ENCODE measurements at regions of chr4 and their contacts with region 1.

Region 1: DNA sequence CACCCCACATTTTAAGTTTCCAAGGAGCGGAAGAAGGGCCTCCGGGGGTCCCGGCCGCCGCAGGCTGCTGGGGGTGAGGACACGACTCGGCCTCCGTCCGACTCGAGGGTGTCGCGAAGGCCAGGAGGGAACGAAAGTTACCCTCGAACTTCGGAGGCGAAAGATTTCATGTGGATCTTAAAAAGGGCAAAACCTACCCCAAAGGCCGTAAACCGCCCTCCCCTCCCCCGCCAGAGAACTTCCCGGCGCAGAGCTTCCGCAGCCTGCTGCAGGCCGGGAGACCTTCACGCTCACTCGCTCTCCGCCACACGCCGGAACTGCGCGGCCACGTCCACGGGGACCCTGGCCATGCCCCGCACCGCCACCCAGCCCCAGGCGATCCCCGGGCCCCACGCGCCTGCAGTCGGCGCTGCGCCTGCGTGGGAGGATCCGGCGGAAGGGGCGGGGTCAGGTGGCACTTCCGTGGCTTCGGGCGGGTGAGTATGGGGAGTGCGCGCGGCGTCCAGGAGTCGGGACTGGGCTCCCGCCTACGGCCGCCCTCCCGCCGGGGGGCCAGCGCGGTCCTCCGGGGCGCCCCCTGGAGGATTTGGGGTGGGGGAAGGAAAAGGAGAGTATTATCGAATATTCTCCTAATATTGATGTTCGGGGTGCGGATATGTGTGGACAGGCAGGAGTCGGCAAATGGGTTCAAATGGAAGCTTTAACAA is at the start of gene MMAA:
- DNase-seq: peak; percentile 94 to 96
- ATAC-seq: peak; percentile 88 to 96 (median 94)
- H3K4me3 ChIP-seq: peak within 1 kb of the TSS; percentile 85
- H3K4me3 Mint-ChIP-seq: peak within 1 kb of the TSS; percentile 98
- H3K27ac ChIP-seq: peak within 1 kb of the TSS; percentile 96
- H3K27ac Mint-ChIP-seq: peak within 1 kb of the TSS; percentile 97 to 98
- H3K4me1 ChIP-seq: peaks cover 11% of the 10 kb centered on the region
- H3K4me1 Mint-ChIP-seq: peaks cover 53 to 54% of the 10 kb centered on the region in 2 donors
- H3K27me3 ChIP-seq: no peaks in the 10 kb centered on the region
- H3K27me3 Mint-ChIP-seq: peaks cover under 1 to 8% of the 10 kb centered on the region in 2 donors
- CTCF ChIP-seq: peak; percentile 49
- total RNA-seq, gene MMAA: 7.8 to 11.7 (median 9.7) TPM

Region 2: DNA sequence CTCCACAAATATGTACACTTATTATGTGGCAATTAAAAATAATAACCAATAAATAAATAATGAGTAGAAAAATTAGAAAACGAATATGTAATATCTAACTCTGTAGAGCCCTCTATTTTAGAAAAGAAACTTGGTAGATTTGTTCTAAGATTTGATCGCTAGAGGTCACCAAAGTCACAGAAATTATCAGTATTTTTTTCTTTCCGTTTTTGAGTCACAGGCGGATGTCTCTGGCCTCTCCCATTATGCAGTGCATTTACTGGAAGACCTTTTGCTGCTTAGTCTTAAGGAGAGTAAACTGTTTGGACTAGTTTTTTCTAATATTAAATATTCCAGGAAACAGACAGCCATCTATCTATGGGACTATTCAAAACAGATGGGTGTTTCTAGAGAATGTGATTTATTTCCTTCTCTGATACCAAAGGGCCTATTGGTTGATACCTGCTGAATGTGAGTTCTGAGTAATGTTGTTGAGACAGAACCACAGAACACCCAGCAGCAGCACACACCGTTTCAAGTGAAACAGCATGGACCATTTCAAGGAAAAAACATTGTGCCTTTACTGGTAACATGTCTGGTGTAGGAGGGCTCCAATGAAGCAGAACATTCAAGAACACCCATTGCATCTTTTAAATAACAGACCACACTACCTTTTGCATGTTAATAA is 1444.6 kb before region 1 on chr4:
- intact Hi-C with region 1: loop called (anchors 5 kb)
- DNase-seq: peak in 1 of 2 donors; percentile 67
- ATAC-seq: peak in 2 of 3 donors; percentile 59 to 60
- H3K4me3 ChIP-seq: no peak overlapping the region
- H3K4me3 Mint-ChIP-seq: no peak overlapping the region
- H3K27ac ChIP-seq: no peak overlapping the region
- H3K27ac Mint-ChIP-seq: no peak overlapping the region
- H3K4me1 ChIP-seq: no peaks in the 10 kb centered on the region
- H3K4me1 Mint-ChIP-seq: no peaks in the 10 kb centered on the region
- H3K27me3 ChIP-seq: no peaks in the 10 kb centered on the region
- H3K27me3 Mint-ChIP-seq: peaks cover 5% of the 10 kb centered on the region in 2 donors
- CTCF ChIP-seq: peak; percentile 51

Region 3: GRCh38 chr4:145180298-145181090 is 438.6 kb before region 1 on chr4 and contains the start of gene OTUD4:
- intact Hi-C with region 1: loop called (anchors 2 kb)
- DNase-seq: peak; percentile 94 to 97
- ATAC-seq: peak; percentile 78 to 95 (median 84)
- H3K4me3 ChIP-seq: peak within 1 kb of the TSS; percentile 82
- H3K4me3 Mint-ChIP-seq: peak within 1 kb of the TSS; percentile 95
- H3K27ac ChIP-seq: peak within 1 kb of the TSS; percentile 99
- H3K27ac Mint-ChIP-seq: peak within 1 kb of the TSS; percentile 95 to 97
- H3K4me1 ChIP-seq: peaks cover 25% of the 10 kb centered on the region
- H3K4me1 Mint-ChIP-seq: peaks cover 36 to 37% of the 10 kb centered on the region in 2 donors
- H3K27me3 ChIP-seq: no peaks in the 10 kb centered on the region
- H3K27me3 Mint-ChIP-seq: no peaks in the 10 kb centered on the region
- CTCF ChIP-seq: no peak
- total RNA-seq, gene OTUD4: 60.0 to 73.3 (median 71.6) TPM

Region 4: DNA sequence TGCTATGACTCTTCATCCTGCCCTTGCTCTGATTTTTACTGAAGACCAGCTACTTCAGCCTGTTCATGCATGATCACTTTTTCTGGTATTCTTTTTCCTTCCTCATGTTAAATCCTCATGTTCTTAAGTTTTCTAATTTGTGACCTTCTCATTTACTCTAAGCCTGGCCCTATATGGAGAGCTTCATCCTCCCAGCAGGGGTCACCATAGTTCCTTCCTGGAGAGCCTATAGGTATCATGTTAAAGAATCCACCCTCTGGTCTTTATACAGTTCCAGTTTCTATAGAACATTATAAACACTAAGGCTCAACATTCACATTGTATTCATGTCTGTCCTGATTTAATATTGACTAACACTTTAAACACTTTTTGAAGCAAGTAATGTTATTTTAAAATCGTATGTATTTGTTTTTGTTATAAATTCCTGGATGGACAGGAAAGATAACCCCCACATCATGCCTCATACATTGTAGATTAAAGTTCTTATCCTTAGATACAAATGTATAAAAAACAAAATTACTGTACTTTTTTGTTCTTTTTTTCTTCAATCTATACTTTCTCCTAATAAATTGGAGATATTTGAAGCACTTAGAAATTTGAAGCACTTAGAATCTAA is 384.9 kb before region 1 on chr4:
- intact Hi-C with region 1: loop called (anchors 2 kb)
- DNase-seq: peak in 1 of 2 donors; percentile 76
- ATAC-seq: peak; percentile 77 to 92 (median 88)
- H3K4me3 ChIP-seq: no peak overlapping the region
- H3K4me3 Mint-ChIP-seq: no peak overlapping the region
- H3K27ac ChIP-seq: no peak overlapping the region
- H3K27ac Mint-ChIP-seq: no peak overlapping the region
- H3K4me1 ChIP-seq: no peaks in the 10 kb centered on the region
- H3K4me1 Mint-ChIP-seq: no peaks in the 10 kb centered on the region
- H3K27me3 ChIP-seq: no peaks in the 10 kb centered on the region
- H3K27me3 Mint-ChIP-seq: peaks cover 2 to 5% of the 10 kb centered on the region in 2 donors
- CTCF ChIP-seq: peak; percentile 67

Region 5: GRCh38 chr4:145481164-145481941 is 137.7 kb before region 1 on chr4 and contains the start of gene SMAD1:
- intact Hi-C with region 1: loop called (anchors 5 kb)
- DNase-seq: peak; percentile 25 to 36
- ATAC-seq: peak; percentile 73 to 75 (median 73)
- H3K4me3 ChIP-seq: peak within 1 kb of the TSS; percentile 30
- H3K4me3 Mint-ChIP-seq: peak within 1 kb of the TSS; percentile 88
- H3K27ac ChIP-seq: no peak within 1 kb of the TSS
- H3K27ac Mint-ChIP-seq: no peak within 1 kb of the TSS
- H3K4me1 ChIP-seq: no peaks in the 10 kb centered on the region
- H3K4me1 Mint-ChIP-seq: peaks cover 9 to 12% of the 10 kb centered on the region in 2 donors
- H3K27me3 ChIP-seq: no peaks in the 10 kb centered on the region
- H3K27me3 Mint-ChIP-seq: peaks cover 20 to 27% of the 10 kb centered on the region in 2 donors
- CTCF ChIP-seq: no peak
- total RNA-seq, gene SMAD1: 2.2 to 12.8 (median 9.9) TPM

Region 6: GRCh38 chr4:145732895-145733880 is 114.1 kb after region 1 on chr4:
- intact Hi-C with region 1: loop called (anchors 5 kb)
- DNase-seq: peak; percentile 71 to 91
- ATAC-seq: peak; percentile 88 to 99 (median 98)
- H3K4me3 ChIP-seq: peak overlapping the region; percentile 60
- H3K4me3 Mint-ChIP-seq: peak overlapping the region; percentile 84
- H3K27ac ChIP-seq: no peak overlapping the region
- H3K27ac Mint-ChIP-seq: peak overlapping the region in 1 of 2 donors; percentile 82
- H3K4me1 ChIP-seq: peaks cover 11% of the 10 kb centered on the region
- H3K4me1 Mint-ChIP-seq: peaks cover 0 to 5% of the 10 kb centered on the region in 2 donors
- H3K27me3 ChIP-seq: no peaks in the 10 kb centered on the region
- H3K27me3 Mint-ChIP-seq: peaks cover 8 to 11% of the 10 kb centered on the region in 2 donors
- CTCF ChIP-seq: no peak

Region 7: GRCh38 chr4:145936142-145936996 is 317.3 kb after region 1 on chr4:
- intact Hi-C with region 1: loop called (anchors 2 kb)
- DNase-seq: peak; percentile 60 to 85
- ATAC-seq: peak; percentile 53 to 78 (median 71)
- H3K4me3 ChIP-seq: peak overlapping the region; percentile 93
- H3K4me3 Mint-ChIP-seq: peak overlapping the region; percentile 88
- H3K27ac ChIP-seq: peak overlapping the region; percentile 74
- H3K27ac Mint-ChIP-seq: peak overlapping the region; percentile 86 to 94
- H3K4me1 ChIP-seq: peaks cover 16% of the 10 kb centered on the region
- H3K4me1 Mint-ChIP-seq: peaks cover 34 to 41% of the 10 kb centered on the region in 2 donors
- H3K27me3 ChIP-seq: no peaks in the 10 kb centered on the region
- H3K27me3 Mint-ChIP-seq: peaks cover 0 to 3% of the 10 kb centered on the region in 2 donors
- CTCF ChIP-seq: peak; percentile 36

Measured in natural killer cell (primary cell).